Endothelial cell of umbilical vein (primary cell): ENCODE measurements at regions of chr2 and their contacts with region 1.

Region 1: GRCh38 chr2:152335010-152335725 is at the start of gene FMNL2:
- DNase-seq: peak; percentile 89
- H3K4me3 ChIP-seq: peak within 1 kb of the TSS; percentile 81 to 96 (median 95)
- H3K27ac ChIP-seq: peak within 1 kb of the TSS; percentile 32
- H3K4me1 ChIP-seq: peaks cover 16% of the 10 kb centered on the region
- H3K27me3 ChIP-seq: no peaks in the 10 kb centered on the region
- CTCF ChIP-seq: peak in 1 of 2 donors; percentile 0
- POLR2A ChIP-seq: peak; percentile 88
- total RNA-seq, gene FMNL2: 25.5 and 28.0 TPM in 2 replicates

Region 2: DNA sequence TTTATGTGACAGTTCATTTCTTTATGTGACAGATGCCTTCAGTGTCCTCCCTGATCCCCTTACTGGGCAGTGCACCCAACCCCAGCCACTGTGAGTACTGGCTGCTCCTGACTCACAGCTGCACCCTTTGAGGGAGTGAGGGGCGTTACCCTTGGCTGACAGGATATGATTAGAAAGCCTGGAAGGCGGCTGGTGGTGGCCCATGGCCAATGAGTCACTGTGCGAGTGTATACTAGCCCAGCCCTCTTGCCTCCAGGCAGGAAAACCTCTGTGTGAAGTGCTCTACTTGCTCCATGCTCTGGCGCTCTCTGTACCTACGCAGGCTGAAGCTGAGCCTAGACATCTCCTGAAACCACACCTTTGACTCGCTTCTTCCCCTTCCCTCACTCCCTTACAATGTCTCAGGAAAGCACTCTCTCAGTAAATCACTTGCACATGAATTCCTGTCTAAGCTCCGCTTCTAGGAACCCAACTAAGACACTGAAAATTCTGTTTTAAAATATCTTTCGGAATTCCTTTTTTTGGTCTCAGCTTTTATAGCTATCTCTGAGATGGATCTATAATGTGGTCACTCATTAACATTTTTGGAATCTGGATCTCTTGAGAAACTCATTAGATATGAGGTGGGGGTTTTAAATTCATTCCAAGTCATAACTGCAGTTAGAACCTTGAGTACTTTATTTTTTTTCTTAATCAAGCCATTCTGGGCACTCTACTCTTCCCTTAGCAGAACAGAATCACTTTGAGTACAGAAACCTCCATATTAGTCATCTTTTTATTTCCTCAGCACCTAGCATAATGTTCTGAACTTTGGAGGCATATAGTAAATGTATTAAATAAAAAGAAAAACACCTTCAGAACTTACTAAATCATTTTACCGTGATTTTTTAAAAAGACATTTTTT is 134.4 kb before region 1 on chr2:
- CTCF ChIA-PET with region 1: interaction called, 3 read pairs
- POLR2A ChIA-PET with region 1: interaction called, 3 read pairs
- dilution Hi-C with region 1: no loop called
- intact Hi-C with region 1: loop called (anchors 1 kb)
- DNase-seq: peak; percentile 97
- H3K4me3 ChIP-seq: peak overlapping the region in 1 of 3 experiments; percentile 9
- H3K27ac ChIP-seq: peak overlapping the region; percentile 69
- H3K4me1 ChIP-seq: peaks cover 15% of the 10 kb centered on the region
- H3K27me3 ChIP-seq: no peaks in the 10 kb centered on the region
- CTCF ChIP-seq: no peak
- POLR2A ChIP-seq: peak; percentile 76

Region 3: DNA sequence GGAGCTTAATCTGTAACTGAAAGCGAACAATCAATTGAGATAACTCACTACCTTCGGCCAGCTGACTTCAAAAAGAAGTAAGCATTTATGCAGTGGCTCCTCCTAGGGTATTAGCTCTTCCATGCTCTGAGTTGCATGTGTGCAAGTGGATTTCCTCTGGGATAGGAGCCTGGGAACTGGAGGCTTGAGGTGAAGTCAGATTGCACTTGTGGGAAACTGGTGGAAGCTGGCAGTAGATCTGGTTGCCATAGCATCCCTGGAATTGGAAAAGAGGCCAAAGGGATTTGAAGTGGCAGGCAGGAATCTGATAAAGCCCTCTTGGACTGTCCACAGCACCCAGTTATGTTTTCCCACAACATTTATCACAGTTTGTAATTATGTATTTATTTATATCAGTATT is 50.8 kb before region 1 on chr2:
- CTCF ChIA-PET with region 1: no interaction called
- POLR2A ChIA-PET with region 1: no interaction called
- dilution Hi-C with region 1: no loop called
- intact Hi-C with region 1: no loop called
- DNase-seq: no peak
- H3K4me3 ChIP-seq: no peak overlapping the region
- H3K27ac ChIP-seq: no peak overlapping the region
- H3K4me1 ChIP-seq: no peaks in the 10 kb centered on the region
- H3K27me3 ChIP-seq: peaks cover 17 to 18% of the 10 kb centered on the region in 2 experiments
- CTCF ChIP-seq: no peak
- POLR2A ChIP-seq: no peak

Region 4: DNA sequence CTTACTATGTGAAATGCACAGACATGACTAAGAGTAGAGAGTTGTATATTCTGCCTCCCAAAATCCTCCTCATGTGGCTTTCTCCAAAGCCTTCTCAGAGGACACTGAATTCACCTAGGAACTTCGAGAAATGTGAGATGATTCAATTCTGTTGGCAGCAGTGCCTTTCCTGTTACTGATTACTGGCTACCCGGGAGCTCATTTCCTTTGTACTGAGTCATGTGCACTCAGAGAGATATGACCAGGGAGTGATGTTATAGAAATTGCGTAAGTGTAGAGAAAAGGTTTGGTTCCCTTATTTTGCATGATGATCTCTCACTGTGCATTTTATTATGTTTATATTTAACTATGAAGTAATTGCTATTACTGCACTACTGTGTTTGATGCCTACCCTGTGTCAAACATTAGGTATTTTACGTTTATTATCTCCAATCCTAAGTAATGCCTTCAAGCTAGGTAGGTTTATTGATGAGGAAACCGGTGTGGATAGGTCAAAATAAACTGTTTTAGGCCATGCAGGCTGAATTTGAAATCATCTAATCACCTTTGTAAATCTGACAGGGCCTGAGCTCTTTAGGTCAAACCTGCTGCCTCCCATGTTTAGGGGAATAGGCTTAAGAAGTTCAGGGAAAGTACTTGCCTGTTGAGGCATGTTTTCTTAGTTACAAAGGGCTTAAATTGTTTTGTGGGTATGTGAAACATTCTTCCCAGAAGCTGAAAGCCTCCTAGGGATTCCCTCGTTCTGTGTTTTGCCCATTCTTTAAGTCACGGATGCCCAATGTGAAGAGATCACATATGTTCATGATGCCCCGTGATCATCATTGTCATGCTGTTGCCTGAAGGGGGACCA is 86.6 kb after region 1 on chr2:
- CTCF ChIA-PET with region 1: interaction called, 5 read pairs
- POLR2A ChIA-PET with region 1: no interaction called
- dilution Hi-C with region 1: no loop called
- intact Hi-C with region 1: loop called (anchors 1 kb)
- DNase-seq: peak; percentile 94
- H3K4me3 ChIP-seq: peak overlapping the region in 1 of 3 experiments; percentile 5
- H3K27ac ChIP-seq: peak overlapping the region; percentile 84
- H3K4me1 ChIP-seq: peaks cover 21% of the 10 kb centered on the region
- H3K27me3 ChIP-seq: no peaks in the 10 kb centered on the region
- CTCF ChIP-seq: no peak
- POLR2A ChIP-seq: peak; percentile 16

Region 5: DNA sequence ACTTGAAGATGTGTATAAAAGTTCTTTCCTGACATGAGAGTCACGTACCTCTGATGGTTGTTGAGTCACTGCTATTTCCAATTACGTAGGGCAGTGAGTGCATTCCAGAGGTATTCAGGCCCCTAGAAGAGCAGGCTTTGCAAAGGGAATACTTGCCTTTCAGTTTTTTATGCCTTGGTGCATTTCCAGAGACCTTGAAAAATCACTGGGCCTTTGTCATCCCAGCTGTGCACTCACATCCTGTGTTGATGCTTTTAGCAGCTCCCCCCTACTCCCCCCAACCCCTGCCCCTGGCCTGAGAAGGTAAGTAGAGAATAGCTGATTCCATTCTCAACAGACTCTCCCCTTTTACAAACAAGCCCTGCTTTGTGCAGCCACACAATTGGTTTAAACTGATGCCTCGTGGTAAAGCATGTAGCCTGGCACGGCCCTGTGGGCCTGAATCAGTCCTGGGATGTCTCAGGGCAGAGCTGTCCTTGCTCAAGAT is 207.9 kb after region 1 on chr2:
- CTCF ChIA-PET with region 1: no interaction called
- POLR2A ChIA-PET with region 1: no interaction called
- dilution Hi-C with region 1: no loop called
- intact Hi-C with region 1: loop called (anchors 1 kb)
- DNase-seq: peak; percentile 93
- H3K4me3 ChIP-seq: no peak overlapping the region
- H3K27ac ChIP-seq: peak overlapping the region; percentile 89
- H3K4me1 ChIP-seq: peaks cover 26% of the 10 kb centered on the region
- H3K27me3 ChIP-seq: no peaks in the 10 kb centered on the region
- CTCF ChIP-seq: no peak
- POLR2A ChIP-seq: no peak

Region 6: DNA sequence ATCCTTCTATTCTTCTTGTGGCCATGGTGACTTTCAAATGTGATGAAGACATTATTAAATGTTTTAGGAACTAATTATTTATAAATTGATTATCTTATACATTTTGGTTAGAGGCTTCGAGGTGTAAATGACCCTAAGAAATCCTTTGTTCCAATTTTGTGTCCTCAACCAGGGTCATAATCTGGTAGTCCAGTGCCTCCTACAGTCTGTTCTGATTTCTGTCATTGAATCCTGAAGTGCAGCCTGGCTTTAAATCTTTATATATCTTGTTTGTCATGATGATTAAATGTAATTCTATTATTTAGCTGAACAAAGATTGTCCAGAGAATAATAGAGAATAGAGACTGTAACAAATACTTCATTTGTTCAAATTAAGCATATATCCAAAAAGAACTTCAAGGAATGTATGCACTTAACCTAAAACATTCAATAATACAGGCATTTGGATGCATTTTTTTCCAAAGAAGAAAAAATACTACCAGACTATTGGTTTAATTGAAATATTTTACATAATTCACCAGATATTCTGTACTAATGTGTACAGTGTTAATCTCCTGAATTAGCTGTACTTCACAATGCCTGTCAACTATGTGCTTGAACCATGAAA is 292.3 kb after region 1 on chr2:
- CTCF ChIA-PET with region 1: interaction called, 8 read pairs
- POLR2A ChIA-PET with region 1: no interaction called
- dilution Hi-C with region 1: no loop called
- intact Hi-C with region 1: loop called (anchors 1 kb)
- DNase-seq: peak; percentile 64
- H3K4me3 ChIP-seq: no peak overlapping the region
- H3K27ac ChIP-seq: no peak overlapping the region
- H3K4me1 ChIP-seq: no peaks in the 10 kb centered on the region
- H3K27me3 ChIP-seq: no peaks in the 10 kb centered on the region
- CTCF ChIP-seq: peak; percentile 43 to 46
- POLR2A ChIP-seq: no peak